Activated B cell treated with CpG ODN at 0.5 μM for 24 hours (primary cell): ENCODE measurements at regions of chr9 and their contacts with region 1.

Region 1: DNA sequence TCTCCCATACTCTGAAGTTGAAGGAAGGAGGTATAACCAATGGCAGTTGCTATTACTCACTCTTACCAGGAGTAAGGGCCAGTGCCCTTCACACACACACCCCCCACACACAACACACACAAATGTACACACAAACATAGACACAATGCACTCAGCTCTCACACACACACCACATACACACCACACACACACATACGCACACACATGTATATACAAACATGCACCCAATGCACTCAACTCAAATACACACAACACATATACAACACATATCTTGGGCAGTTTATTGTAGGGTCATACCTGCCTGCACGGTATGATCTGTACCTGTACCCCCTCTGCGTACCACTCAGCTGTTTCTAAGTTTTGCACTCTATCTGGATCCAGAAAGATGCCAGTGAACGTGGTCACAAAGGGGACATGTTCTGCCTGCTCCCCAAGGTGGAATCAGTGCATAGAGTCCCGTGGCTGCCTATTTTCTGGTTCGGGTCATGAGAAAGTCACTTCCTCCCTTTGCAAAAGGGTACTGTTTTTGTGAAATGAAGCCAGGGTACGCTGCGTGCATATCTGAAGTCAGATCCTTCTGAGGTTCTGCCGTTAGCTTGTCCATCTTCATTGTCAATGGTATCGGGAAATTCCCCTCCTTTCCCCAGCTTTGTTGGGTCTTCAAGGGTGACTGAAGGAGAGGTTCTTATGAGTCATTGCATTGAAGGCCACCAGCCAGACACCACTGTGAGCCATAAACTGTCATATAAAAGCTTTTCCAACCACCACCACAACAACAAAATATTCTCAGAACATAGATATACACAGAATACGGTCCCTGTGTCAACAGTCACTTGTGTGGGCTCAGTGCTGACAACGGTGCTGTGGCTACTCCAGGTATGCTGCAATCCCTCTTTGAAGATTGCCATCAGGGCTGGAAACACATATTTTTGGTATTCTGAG is 131.9 kb downstream of the UGCG start:
- DNase-seq: peak; percentile 41
- ATAC-seq: peak; percentile 79
- H3K4me3 Mint-ChIP-seq: peak overlapping the region; percentile 82
- H3K27ac Mint-ChIP-seq: peak overlapping the region; percentile 91
- H3K4me1 Mint-ChIP-seq: peaks cover 77% of the 10 kb centered on the region
- H3K27me3 Mint-ChIP-seq: no peaks in the 10 kb centered on the region
- CTCF ChIP-seq: no peak

Region 2: DNA sequence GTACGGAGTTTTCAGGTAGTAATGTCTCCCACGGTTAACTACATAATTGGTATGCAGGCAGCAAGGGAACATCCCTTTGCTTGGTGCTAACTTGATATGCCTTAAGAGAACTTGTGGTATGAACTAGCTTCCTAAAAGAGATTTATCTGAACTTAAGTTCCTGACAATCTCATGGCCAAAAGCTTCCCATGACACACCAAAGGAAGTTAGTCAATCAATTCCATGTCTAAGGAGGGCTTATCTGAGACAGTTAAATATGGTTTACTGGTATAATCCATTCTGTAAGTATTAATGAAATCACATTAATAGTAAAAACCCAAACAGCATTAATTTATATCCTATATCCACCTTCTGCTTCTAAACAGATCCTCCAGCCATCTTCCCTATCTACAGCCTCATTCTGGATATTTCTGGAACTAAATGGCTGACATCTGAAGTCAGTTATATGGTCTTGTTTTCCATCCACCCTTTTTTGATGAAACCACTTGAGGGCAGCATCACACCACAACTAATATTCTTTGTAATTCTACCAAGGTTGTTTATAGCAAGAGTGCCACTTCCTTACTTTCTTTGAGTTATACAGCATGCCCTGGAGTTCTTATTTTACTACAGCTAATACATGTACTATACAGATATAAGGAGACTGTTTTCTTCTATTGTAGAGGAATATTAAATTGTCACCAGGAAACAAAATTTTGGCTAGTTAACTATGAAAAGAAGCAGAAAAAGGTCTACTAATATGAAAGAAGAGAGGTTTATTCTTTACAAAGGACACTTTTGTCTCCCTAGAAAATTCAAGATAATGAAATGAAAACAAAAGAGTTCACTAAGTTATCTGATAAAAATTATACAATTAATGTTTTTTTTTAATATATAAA is 268.6 kb before region 1 on chr9:
- CTCF ChIA-PET with region 1: no interaction called
- POLR2A ChIA-PET with region 1: no interaction called
- intact Hi-C with region 1: loop called (anchors 1 kb)
- DNase-seq: no peak
- ATAC-seq: peak; percentile 84
- H3K4me3 Mint-ChIP-seq: no peak overlapping the region
- H3K27ac Mint-ChIP-seq: no peak overlapping the region
- H3K4me1 Mint-ChIP-seq: peaks cover 4% of the 10 kb centered on the region
- H3K27me3 Mint-ChIP-seq: no peaks in the 10 kb centered on the region
- CTCF ChIP-seq: peak; percentile 55

Region 3: GRCh38 chr9:111926421-111926875 is 102.1 kb before region 1 on chr9:
- CTCF ChIA-PET with region 1: no interaction called
- POLR2A ChIA-PET with region 1: interaction called, 11 read pairs
- intact Hi-C with region 1: loop called (anchors 1 kb)
- DNase-seq: peak; percentile 34
- ATAC-seq: peak; percentile 97
- H3K4me3 Mint-ChIP-seq: peak overlapping the region; percentile 56
- H3K27ac Mint-ChIP-seq: peak overlapping the region; percentile 83
- H3K4me1 Mint-ChIP-seq: peaks cover 48% of the 10 kb centered on the region
- H3K27me3 Mint-ChIP-seq: no peaks in the 10 kb centered on the region
- CTCF ChIP-seq: no peak

Region 4: DNA sequence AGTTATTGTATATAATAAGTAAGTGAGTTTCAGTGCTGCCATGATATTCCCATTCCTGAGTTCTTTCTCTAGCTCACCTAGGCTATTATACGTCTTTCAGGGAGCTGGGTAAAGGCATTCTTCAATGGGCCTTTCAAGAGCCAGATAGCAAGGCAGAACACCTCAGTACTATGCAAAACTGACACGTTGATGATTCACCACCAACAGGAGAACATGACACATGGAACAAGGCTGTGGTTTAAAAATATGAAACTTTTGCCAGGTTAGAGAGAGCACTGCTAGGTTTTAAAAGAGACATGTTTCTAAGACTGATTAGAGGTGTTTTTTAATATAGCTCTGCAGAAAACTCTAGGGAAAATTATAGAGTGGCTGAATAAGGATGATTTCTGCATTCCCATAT is 36.0 kb before region 1 on chr9:
- CTCF ChIA-PET with region 1: interaction called, 9 read pairs
- POLR2A ChIA-PET with region 1: interaction called, 120 read pairs
- intact Hi-C with region 1: loop called (anchors 1 kb)
- DNase-seq: no peak
- ATAC-seq: peak; percentile 92
- H3K4me3 Mint-ChIP-seq: no peak overlapping the region
- H3K27ac Mint-ChIP-seq: peak overlapping the region; percentile 79
- H3K4me1 Mint-ChIP-seq: peaks cover 47% of the 10 kb centered on the region
- H3K27me3 Mint-ChIP-seq: no peaks in the 10 kb centered on the region
- CTCF ChIP-seq: no peak

Region 5: GRCh38 chr9:112012026-112012902 is 16.3 kb before region 1 on chr9:
- CTCF ChIA-PET with region 1: interaction called, 5 read pairs
- POLR2A ChIA-PET with region 1: interaction called, 308 read pairs
- intact Hi-C with region 1: loop called (anchors 1 kb)
- DNase-seq: no peak
- ATAC-seq: peak; percentile 85
- H3K4me3 Mint-ChIP-seq: peak overlapping the region; percentile 47
- H3K27ac Mint-ChIP-seq: peak overlapping the region; percentile 93
- H3K4me1 Mint-ChIP-seq: peaks cover 84% of the 10 kb centered on the region
- H3K27me3 Mint-ChIP-seq: no peaks in the 10 kb centered on the region
- CTCF ChIP-seq: no peak